Activated T-helper 2 cell treated with anti-CD3 and anti-CD28 coated beads, Interferon-gamma antibody, Interleukin-2, Interleukin-4, amounts not matched to agents 10 μg/mL and 5 μg/mL and 100 μg/mL, durations not matched to agents 14 hours and 24 hours and 36 hours (primary cell): ENCODE measurements at regions of chr9 and their contacts with region 1.

Region 1: DNA sequence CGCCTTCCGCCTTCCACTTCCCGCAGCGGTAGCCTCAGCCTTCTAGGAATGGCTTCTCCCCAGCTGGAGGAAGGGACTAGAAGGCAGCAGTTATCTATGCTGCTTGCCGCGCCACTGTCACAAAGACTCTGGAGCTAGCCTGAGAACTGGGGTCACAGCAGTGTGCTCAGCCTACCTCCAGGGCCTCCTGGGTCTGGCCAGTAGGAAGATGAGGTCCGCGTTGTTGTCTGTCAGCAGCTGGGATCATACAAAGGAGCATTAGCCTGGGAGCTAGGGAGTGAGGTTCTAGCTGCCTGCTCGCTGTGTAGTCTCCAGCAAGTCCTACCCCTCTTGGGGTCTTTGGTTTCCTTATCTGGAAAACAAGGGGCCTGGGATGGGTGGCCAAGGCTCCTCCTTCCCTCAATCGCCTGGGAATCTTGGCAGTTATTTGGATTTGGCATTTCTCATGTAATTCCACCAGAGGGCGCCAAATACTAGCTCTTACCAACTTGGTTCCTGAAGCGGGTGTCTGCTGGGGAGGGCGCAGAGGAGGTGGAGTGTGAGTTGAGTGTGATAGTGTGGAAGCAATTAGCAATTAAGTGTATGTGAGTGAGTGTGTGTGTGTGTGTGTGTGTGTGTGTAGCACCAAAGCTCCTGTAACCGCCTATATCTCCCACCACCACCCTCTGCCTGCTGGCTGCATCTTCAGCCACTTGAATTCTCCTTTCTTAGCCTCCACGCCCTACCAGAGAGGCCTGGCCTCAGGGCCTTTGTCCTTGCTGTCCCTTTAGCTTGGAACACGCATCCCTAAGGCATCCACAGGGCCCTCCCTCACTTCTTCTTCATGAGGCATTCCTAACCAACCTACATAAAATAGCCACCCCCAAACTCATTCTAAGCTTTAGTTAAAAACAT is 97.1 kb downstream of the ENTREP1 start:
- DNase-seq: peak; percentile 19
- H3K4me3 Mint-ChIP-seq: no peak overlapping the region
- H3K27ac Mint-ChIP-seq: no peak overlapping the region
- H3K4me1 Mint-ChIP-seq: no peaks in the 10 kb centered on the region
- H3K27me3 Mint-ChIP-seq: peaks cover 4% of the 10 kb centered on the region

Region 2: DNA sequence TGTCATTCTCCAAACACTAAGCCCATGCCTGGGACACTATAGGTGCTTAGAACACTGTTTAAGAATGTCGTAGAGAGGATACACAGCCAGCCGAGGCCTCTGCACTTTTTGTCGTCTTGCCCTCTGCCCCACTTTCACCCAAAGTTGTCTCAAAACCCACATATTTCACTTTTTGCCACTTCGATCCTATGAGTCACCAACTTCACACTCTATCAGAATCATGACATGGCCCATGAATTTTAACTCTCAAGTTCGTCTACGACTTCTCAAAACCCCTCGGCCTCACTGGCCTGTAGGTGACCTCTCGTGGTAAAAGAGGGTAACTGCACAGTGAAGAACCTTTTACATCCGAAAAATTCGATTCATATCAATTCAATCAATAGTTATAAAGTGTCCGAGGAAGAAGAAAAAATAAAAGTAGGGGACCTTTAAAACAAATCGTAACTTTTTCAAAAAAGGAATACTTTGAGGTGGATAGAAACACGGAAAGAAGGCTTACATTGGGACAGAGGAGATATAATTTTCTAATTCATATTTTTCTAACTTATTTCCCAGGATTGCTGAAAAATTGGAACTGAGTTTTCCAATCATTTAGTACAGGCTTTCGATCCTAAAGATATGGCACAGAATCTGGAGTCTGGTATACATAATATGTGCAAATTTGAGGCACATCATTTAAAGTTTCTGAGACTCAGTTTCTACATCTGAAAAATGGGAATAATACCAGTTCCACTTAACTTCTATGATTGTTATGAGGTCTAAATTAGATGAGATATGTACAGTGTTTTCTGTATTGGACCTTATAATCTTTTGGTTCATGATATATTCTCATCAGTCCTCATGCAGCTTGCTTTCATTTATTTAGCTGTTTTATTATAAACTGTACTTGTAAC is 127.4 kb after region 1 on chr9:
- intact Hi-C with region 1: loop called (anchors 2 kb)
- DNase-seq: no peak
- H3K4me3 Mint-ChIP-seq: no peak overlapping the region
- H3K27ac Mint-ChIP-seq: no peak overlapping the region
- H3K4me1 Mint-ChIP-seq: peaks cover 4% of the 10 kb centered on the region
- H3K27me3 Mint-ChIP-seq: peaks cover 30% of the 10 kb centered on the region

Region 3: DNA sequence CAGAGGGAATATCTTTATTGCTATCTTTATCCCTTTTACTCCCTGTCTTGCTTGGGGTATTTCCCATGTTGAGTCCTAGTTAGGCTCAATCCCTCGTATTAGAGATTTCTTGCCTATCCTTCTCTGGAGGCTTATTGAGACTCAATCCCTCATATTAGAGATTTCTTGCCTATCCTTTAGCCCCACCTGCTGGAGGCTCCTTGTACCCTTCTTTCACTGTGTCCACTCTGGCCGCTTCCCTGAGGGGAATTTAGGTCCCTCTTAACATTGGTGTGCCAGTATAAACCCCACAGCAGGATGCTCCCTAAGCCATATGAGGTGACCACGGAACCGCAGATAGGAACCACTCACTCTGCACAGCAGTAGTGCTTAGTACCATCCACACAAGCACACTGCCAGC is 510.7 kb after region 1 on chr9:
- intact Hi-C with region 1: loop called (anchors 5 kb)
- DNase-seq: no peak
- H3K4me3 Mint-ChIP-seq: no peak overlapping the region
- H3K27ac Mint-ChIP-seq: no peak overlapping the region
- H3K4me1 Mint-ChIP-seq: no peaks in the 10 kb centered on the region
- H3K27me3 Mint-ChIP-seq: peaks cover 18% of the 10 kb centered on the region

Region 4: DNA sequence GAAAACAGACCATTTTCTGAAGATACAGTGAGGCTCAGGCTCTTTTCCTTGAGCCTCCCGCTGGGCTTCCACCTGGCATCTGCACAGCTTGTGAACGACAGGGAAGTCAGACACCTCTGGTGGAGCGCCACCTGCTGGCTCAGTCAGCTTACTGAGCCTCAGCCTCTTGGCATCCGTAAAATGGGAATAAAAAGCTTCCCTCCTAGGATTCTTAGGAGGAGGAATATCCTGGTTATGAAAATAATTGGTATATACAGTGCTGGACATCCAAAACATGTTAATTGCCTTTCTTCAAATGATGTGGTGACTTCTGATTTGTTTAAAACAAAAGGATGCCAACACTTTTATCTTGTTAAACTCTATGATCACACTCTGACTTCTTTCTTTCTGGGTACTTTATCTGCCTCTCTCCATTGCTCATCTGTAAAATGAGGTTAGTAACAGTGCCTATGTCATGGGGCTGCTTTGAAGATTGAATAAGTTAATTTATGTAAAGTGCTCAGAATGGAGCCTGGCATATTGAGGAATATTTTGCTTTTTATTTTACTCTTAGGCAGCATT is 689.0 kb after region 1 on chr9:
- intact Hi-C with region 1: loop called (anchors 5 kb)
- DNase-seq: no peak
- H3K4me3 Mint-ChIP-seq: no peak overlapping the region
- H3K27ac Mint-ChIP-seq: no peak overlapping the region
- H3K4me1 Mint-ChIP-seq: peaks cover 4% of the 10 kb centered on the region
- H3K27me3 Mint-ChIP-seq: peaks cover 12% of the 10 kb centered on the region